Mammary epithelial cell (primary cell): ENCODE measurements at regions of chr17 and their contacts with region 1.

Region 1: DNA sequence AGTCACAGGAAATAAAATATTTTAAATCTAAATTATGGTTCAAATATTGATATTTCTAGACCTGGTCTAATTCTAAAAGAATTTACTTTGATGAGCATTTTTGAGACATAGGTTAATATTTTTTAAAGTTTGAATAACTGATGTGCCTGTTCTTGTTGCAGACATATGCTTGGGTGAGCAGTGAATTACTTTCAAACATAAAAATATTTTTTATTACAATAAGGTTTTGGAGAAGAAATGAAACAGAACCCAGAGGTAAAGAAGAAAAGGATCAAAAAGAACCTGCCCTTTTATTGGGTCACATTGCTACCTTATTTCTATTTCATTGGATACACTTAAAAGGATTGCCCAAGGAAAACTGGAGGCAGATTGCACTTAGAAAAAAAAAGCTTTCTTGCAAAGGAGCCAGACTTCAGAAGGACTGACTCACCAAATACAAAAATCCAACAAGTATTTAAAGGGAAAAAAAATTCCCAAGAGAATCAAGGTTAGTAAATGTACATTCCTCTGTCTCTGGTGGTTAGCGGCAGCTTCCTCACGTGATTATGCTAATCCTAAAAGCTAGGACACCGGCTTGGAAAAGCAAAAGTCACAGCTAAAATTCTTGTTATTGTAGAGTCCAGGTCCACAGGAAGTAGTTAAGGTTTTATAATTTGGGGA is 18.5 kb downstream of the ENPP7 start:
- DNase-seq: peak; percentile 27
- H3K4me3 ChIP-seq: no peak overlapping the region
- H3K27ac ChIP-seq: no peak overlapping the region
- H3K4me1 ChIP-seq: no peaks in the 10 kb centered on the region
- H3K27me3 ChIP-seq: peaks cover 25% of the 10 kb centered on the region
- CTCF ChIP-seq: no peak

Region 2: DNA sequence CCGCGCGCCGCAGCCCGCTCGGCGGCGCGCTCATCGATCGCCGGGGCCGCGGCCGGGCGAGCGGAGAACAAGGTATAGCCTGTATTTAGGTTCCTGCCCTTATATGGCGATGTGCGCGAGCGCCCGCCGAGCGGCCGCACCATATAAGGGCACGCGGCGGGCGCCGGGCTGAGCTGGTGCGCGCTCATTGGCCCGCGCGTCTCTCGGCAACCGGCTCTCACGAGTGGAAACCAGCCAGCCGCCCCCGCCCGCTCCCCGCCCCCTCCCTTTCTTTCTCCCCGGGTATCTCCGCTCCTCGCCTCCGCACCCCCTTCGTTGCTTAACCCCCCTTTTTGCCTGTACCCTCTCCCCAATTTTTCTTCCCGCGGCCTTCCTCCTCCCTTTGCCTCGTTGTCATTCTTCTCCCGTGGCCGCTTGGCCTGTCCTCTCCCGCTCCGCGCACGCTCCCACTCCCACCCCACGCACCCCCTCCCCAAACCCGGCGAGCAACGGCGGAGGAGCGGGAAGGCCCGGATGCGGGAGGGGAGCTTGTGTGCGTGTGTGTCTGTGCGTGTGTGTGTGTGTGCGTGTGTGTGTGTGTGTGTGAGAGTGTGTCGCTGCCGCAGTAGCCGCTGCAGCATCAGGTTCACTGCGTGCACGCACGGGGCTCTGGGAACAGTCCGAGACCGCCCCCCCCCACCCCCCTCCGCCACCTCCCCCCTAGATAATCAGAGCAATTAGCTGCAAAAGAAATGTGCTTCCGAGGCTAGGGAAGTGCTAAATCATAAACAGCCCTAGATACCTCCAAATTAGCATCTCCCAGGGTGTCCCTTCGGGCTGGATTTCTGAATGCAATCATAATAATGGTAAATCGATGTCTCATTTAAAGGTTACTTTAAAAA is 61.1 kb after region 1 on chr17:
- CTCF ChIA-PET with region 1: no interaction called
- dilution Hi-C with region 1: loop called (anchors 5 kb)
- in situ Hi-C with region 1: no loop called
- intact Hi-C with region 1: loop called (anchors 2 kb)
- DNase-seq: peak; percentile 80
- H3K4me3 ChIP-seq: peak overlapping the region in 2 of 3 experiments; percentile 9 to 42
- H3K27ac ChIP-seq: no peak overlapping the region
- H3K4me1 ChIP-seq: peaks cover 40% of the 10 kb centered on the region
- H3K27me3 ChIP-seq: peaks cover 25% of the 10 kb centered on the region
- CTCF ChIP-seq: no peak